GM12878 (cell line): ENCODE measurements at regions of chr14 and their contacts with region 1.

Region 1: GRCh38 chr14:72104011-72104613 is 171.9 kb downstream of the RGS6 start:
- DNase-seq: no peak
- ATAC-seq: peak; percentile 75
- H3K4me3 ChIP-seq: no peak overlapping the region
- H3K27ac ChIP-seq: no peak overlapping the region
- H3K4me1 ChIP-seq: no peaks in the 10 kb centered on the region
- H3K27me3 ChIP-seq: no peaks in the 10 kb centered on the region
- CTCF ChIP-seq: peak; percentile 59 to 72 (median 66)
- EP300 ChIP-seq: no peak
- POLR2A ChIP-seq: no peak
- RAD21 ChIP-seq: peak; percentile 64

Region 2: GRCh38 chr14:72060917-72061316 is 43.2 kb before region 1 on chr14:
- CTCF ChIA-PET with region 1: interaction called, 5 read pairs
- POLR2A ChIA-PET with region 1: no interaction called
- RAD21 ChIA-PET with region 1: no interaction called
- SMC1A ChIA-PET with region 1: interaction called, 16 read pairs
- in situ Hi-C with region 1: no loop called
- intact Hi-C with region 1: no loop called
- DNase-seq: no peak
- ATAC-seq: no peak
- H3K4me3 ChIP-seq: no peak overlapping the region
- H3K27ac ChIP-seq: no peak overlapping the region
- H3K4me1 ChIP-seq: no peaks in the 10 kb centered on the region
- H3K27me3 ChIP-seq: no peaks in the 10 kb centered on the region
- CTCF ChIP-seq: no peak
- EP300 ChIP-seq: no peak
- POLR2A ChIP-seq: no peak
- RAD21 ChIP-seq: no peak

Region 3: GRCh38 chr14:72115964-72116363 is 11.9 kb after region 1 on chr14:
- CTCF ChIA-PET with region 1: interaction called, 20 read pairs
- POLR2A ChIA-PET with region 1: interaction called, 8 read pairs
- RAD21 ChIA-PET with region 1: no interaction called
- SMC1A ChIA-PET with region 1: interaction called, 5 read pairs
- in situ Hi-C with region 1: no loop called
- intact Hi-C with region 1: no loop called
- DNase-seq: no peak
- ATAC-seq: no peak
- H3K4me3 ChIP-seq: no peak overlapping the region
- H3K27ac ChIP-seq: no peak overlapping the region
- H3K4me1 ChIP-seq: no peaks in the 10 kb centered on the region
- H3K27me3 ChIP-seq: no peaks in the 10 kb centered on the region
- CTCF ChIP-seq: no peak
- EP300 ChIP-seq: no peak
- POLR2A ChIP-seq: no peak
- RAD21 ChIP-seq: no peak

Region 4: DNA sequence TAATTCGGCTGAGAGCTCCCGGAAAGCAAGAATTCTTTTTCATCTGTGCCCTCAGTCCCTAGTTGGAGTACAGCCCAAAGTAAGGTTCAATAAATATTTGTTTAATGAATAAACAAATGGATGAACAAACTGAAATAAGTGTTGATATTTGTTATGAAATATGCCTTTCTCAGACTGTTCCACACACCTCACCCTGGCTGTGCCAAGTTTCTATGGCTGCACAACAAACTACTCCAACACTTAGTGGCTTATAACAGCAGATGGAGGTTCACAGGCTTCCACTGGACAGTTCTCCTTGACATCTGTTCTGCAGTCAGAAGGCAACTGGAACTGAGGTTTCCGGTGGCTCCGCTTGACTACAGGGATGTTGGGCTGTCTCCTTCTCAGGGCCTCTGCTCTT is 25.2 kb after region 1 on chr14:
- CTCF ChIA-PET with region 1: interaction called, 18 read pairs
- POLR2A ChIA-PET with region 1: no interaction called
- RAD21 ChIA-PET with region 1: interaction called, 5 read pairs
- SMC1A ChIA-PET with region 1: interaction called, 31 read pairs
- in situ Hi-C with region 1: no loop called
- intact Hi-C with region 1: no loop called
- DNase-seq: no peak
- ATAC-seq: no peak
- H3K4me3 ChIP-seq: no peak overlapping the region
- H3K27ac ChIP-seq: no peak overlapping the region
- H3K4me1 ChIP-seq: no peaks in the 10 kb centered on the region
- H3K27me3 ChIP-seq: peaks cover 0 to 6% of the 10 kb centered on the region in 2 experiments; a peak in 1 of 4 replicates
- CTCF ChIP-seq: no peak
- EP300 ChIP-seq: no peak
- POLR2A ChIP-seq: no peak
- RAD21 ChIP-seq: no peak

Region 5: DNA sequence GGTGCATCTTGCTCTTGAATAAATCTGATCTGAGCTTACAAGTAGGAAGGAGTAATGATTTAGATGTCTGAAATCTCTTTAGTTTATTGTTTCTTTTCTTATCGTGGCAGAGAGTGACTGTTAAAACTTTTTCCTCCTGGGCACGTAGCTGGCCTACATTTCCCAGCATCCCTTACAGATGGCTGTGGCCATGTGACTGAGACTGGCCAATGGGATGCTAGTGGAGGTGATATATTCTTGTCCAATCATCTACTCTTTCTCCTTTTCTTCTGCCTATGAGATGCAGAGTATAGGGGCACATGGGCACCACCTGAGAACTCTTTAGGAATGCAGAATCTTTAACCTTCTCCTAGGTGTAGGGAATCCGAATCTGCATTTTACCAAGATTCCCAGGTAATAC is 65.4 kb after region 1 on chr14:
- CTCF ChIA-PET with region 1: interaction called, 16 read pairs
- POLR2A ChIA-PET with region 1: no interaction called
- RAD21 ChIA-PET with region 1: interaction called, 5 read pairs
- SMC1A ChIA-PET with region 1: interaction called, 6 read pairs
- in situ Hi-C with region 1: no loop called
- intact Hi-C with region 1: no loop called
- DNase-seq: no peak
- ATAC-seq: peak; percentile 49
- H3K4me3 ChIP-seq: no peak overlapping the region
- H3K27ac ChIP-seq: no peak overlapping the region
- H3K4me1 ChIP-seq: no peaks in the 10 kb centered on the region
- H3K27me3 ChIP-seq: no peaks in the 10 kb centered on the region
- CTCF ChIP-seq: no peak
- EP300 ChIP-seq: no peak
- POLR2A ChIP-seq: no peak
- RAD21 ChIP-seq: no peak

Region 6: DNA sequence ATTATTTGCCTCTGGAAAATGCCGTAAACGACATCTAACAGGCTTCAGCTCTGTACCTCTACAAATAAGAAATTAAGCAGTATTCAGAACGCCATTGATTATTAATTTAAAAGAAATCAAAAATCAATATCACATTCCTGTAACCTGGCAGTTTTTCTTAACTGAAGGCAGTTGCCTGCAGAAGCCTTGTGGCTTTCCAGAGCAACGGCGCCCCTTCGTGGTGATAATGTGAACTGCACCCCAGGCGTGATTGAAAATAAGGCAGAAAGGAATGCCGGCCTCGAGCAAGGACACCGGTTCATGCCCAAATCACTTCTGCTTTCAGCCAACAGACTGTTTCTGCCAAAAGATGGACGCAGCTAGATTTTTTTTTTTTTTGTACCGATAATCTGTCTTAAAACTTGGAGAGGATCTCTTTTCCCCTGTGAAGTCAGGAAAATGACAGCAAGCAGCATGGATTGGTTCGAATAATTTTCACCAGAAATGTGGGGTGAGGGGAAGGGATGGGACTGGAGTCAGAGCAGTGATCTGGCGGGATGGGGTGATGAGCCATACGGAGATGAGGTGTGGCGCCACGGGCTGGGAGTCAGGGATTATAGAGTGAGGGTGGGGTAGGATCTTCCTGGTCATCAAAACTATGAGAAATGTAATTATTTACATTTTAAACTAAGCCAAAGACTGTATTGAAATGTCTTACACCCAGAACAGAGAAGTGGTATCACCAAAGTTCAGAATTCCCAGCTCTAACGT is 316.8 kb after region 1 on chr14:
- CTCF ChIA-PET with region 1: interaction called, 16 read pairs
- POLR2A ChIA-PET with region 1: no interaction called
- RAD21 ChIA-PET with region 1: no interaction called
- SMC1A ChIA-PET with region 1: interaction called, 4 read pairs
- in situ Hi-C with region 1: no loop called
- intact Hi-C with region 1: no loop called
- DNase-seq: peak; percentile 49
- ATAC-seq: peak; percentile 83
- H3K4me3 ChIP-seq: no peak overlapping the region
- H3K27ac ChIP-seq: no peak overlapping the region
- H3K4me1 ChIP-seq: no peaks in the 10 kb centered on the region
- H3K27me3 ChIP-seq: no peaks in the 10 kb centered on the region
- CTCF ChIP-seq: peak; percentile 91 to 97 (median 95)
- EP300 ChIP-seq: no peak
- POLR2A ChIP-seq: no peak
- RAD21 ChIP-seq: peak; percentile 99